PC-9 (cell line): ENCODE measurements at regions of chr11 and their contacts with region 1.

Region 1: DNA sequence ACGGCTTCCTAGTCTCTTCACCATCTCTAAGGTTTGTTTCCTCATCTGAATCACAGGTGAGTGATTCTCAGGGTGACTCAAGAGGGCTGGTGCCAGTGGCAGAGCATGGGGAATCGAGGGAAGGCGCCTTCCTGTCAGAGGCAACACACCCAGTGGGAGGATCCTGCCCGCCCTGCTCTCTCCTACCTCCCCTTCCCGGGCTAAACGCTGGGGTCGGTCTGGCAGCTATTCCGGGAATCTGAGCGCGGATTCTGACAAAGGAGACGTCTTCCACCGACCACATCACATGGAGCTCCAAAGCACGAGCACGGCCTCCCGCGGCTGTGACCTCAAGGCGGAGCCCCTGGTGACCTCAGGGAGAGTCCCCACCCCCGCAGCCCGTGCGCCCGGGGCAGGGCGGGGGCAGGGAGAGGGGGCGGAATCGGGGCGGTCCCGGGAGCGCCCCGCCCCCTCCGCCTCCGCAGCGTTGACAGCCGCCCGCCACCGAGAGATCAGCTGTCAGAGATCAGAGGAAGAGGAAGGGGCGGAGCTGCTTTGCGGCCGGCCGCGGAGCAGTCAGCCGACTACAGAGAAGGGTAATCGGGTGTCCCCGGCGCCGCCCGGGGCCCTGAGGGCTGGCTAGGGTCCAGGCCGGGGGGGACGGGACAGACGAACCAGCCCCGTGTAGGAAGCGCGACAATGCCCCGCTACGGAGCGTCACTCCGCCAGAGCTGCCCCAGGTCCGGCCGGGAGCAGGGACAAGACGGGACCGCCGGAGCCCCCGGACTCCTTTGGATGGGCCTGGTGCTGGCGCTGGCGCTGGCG is at the start of gene SMPD1:
- DNase-seq: peak; percentile 84 to 90
- H3K4me3 ChIP-seq: peak within 1 kb of the TSS; percentile 66
- H3K27ac ChIP-seq: peak within 1 kb of the TSS; percentile 32
- H3K4me1 ChIP-seq: peaks cover 7% of the 10 kb centered on the region; the same call in 1 of the 2 replicates
- H3K27me3 ChIP-seq: no peaks in the 10 kb centered on the region
- CTCF ChIP-seq: no peak
- total RNA-seq, gene SMPD1: 7.2 and 9.2 TPM in 2 replicates

Region 2: GRCh38 chr11:6315811-6316425 is 74.2 kb before region 1 on chr11:
- CTCF ChIA-PET with region 1: no interaction called
- POLR2A ChIA-PET with region 1: no interaction called
- intact Hi-C with region 1: no loop called
- DNase-seq: peak in 1 of 2 experiments; percentile 23
- H3K4me3 ChIP-seq: no peak overlapping the region
- H3K27ac ChIP-seq: no peak overlapping the region
- H3K4me1 ChIP-seq: no peaks in the 10 kb centered on the region
- H3K27me3 ChIP-seq: no peaks in the 10 kb centered on the region
- CTCF ChIP-seq: peak; percentile 68

Region 3: DNA sequence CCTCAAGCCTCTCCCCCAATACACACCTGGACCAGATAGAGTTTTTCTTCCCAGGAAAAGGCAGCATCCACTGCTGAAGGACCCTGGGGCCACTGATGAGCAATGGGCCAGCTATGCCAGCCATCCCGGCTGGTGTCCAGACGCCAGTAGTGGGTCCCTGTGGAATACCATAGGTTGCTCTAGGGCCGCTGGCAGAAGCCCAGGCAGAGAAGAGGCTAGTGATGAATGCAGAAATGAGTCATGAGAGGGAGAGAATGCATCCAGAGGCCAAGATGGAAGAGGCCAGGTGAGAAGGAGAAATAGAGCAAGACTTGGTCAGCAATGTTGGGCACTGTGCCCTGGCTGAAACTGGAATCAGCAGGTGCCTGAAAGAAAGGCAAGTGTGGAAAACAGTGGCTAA is 41.7 kb after region 1 on chr11:
- CTCF ChIA-PET with region 1: no interaction called
- POLR2A ChIA-PET with region 1: interaction called, 5 read pairs
- intact Hi-C with region 1: loop called (anchors 2 kb)
- DNase-seq: peak; percentile 78 to 83
- H3K4me3 ChIP-seq: no peak overlapping the region
- H3K27ac ChIP-seq: no peak overlapping the region
- H3K4me1 ChIP-seq: 0 out of 2 replicates have a peak, but pooled peaks cover 3% of the 10 kb centered on the region
- H3K27me3 ChIP-seq: no peaks in the 10 kb centered on the region
- CTCF ChIP-seq: no peak

Region 4: GRCh38 chr11:6473481-6474422 is 83.6 kb after region 1 on chr11 and contains the start of gene TRIM3:
- CTCF ChIA-PET with region 1: no interaction called
- POLR2A ChIA-PET with region 1: interaction called, 14 read pairs
- intact Hi-C with region 1: no loop called
- DNase-seq: peak; percentile 63 to 78
- H3K4me3 ChIP-seq: peak within 1 kb of the TSS; percentile 71; the same call in 1 of the 2 replicates
- H3K27ac ChIP-seq: peak within 1 kb of the TSS; percentile 68
- H3K4me1 ChIP-seq: no peaks in the 10 kb centered on the region
- H3K27me3 ChIP-seq: no peaks in the 10 kb centered on the region
- CTCF ChIP-seq: peak; percentile 22; the same call in 1 of the 2 replicates
- total RNA-seq, gene TRIM3: 7.1 and 9.0 TPM in 2 replicates

Region 5: GRCh38 chr11:6481012-6481923 is 91.1 kb after region 1 on chr11 and contains the starts of genes ARFIP2 and TIMM10B:
- CTCF ChIA-PET with region 1: no interaction called
- POLR2A ChIA-PET with region 1: no interaction called
- intact Hi-C with region 1: loop called (anchors 2 kb)
- DNase-seq: peak; percentile 89 to 91
- H3K4me3 ChIP-seq: peak within 1 kb of the TSS; percentile 82
- H3K27ac ChIP-seq: peak within 1 kb of the TSS; percentile 84
- H3K4me1 ChIP-seq: 0 out of 2 replicates have a peak, but pooled peaks cover 13% of the 10 kb centered on the region
- H3K27me3 ChIP-seq: no peaks in the 10 kb centered on the region
- CTCF ChIP-seq: no peak
- total RNA-seq, gene ARFIP2: 42.7 and 49.5 TPM in 2 replicates
- total RNA-seq, gene TIMM10B: 18.5 and 22.3 TPM in 2 replicates

Region 6: GRCh38 chr11:6603287-6604080 is 213.4 kb after region 1 on chr11 and contains the starts of genes ILK and RRP8:
- CTCF ChIA-PET with region 1: no interaction called
- POLR2A ChIA-PET with region 1: no interaction called
- intact Hi-C with region 1: loop called (anchors 5 kb)
- DNase-seq: peak; percentile 61 to 77
- H3K4me3 ChIP-seq: peak within 1 kb of the TSS; percentile 98
- H3K27ac ChIP-seq: peak within 1 kb of the TSS; percentile 51
- H3K4me1 ChIP-seq: peaks cover 28% of the 10 kb centered on the region
- H3K27me3 ChIP-seq: no peaks in the 10 kb centered on the region
- CTCF ChIP-seq: no peak
- total RNA-seq, gene ILK: 65.3 and 69.7 TPM in 2 replicates
- total RNA-seq, gene RRP8: 10.0 and 10.1 TPM in 2 replicates

Region 7: GRCh38 chr11:6682936-6683861 is 293.1 kb after region 1 on chr11 and contains the start of gene MRPL17:
- CTCF ChIA-PET with region 1: no interaction called
- POLR2A ChIA-PET with region 1: interaction called, 4 read pairs
- intact Hi-C with region 1: loop called (anchors 5 kb)
- DNase-seq: peak; percentile 89 to 95
- H3K4me3 ChIP-seq: peak within 1 kb of the TSS; percentile 88
- H3K27ac ChIP-seq: peak within 1 kb of the TSS; percentile 43
- H3K4me1 ChIP-seq: peaks cover 10% of the 10 kb centered on the region
- H3K27me3 ChIP-seq: no peaks in the 10 kb centered on the region
- CTCF ChIP-seq: peak; percentile 76
- total RNA-seq, gene MRPL17: 35.5 and 42.4 TPM in 2 replicates